CD8-positive, alpha-beta T cell (primary cell): ENCODE measurements at regions of chr14 and their contacts with region 1.

Region 1: GRCh38 chr14:54366736-54367735 is 29.8 kb upstream of the CDKN3 start:
- DNase-seq: peak in 8 of 9 experiments; percentile 9 to 61 (median 39)
- ATAC-seq: peak; percentile 94
- H3K4me3 ChIP-seq: no peak overlapping the region
- H3K4me3 Mint-ChIP-seq: no peak overlapping the region
- H3K27ac ChIP-seq: no peak overlapping the region
- H3K27ac Mint-ChIP-seq: no peak overlapping the region
- H3K4me1 ChIP-seq: no peaks in the 10 kb centered on the region
- H3K4me1 Mint-ChIP-seq: peaks cover 1% of the 10 kb centered on the region
- H3K27me3 ChIP-seq: no peaks in the 10 kb centered on the region
- H3K27me3 Mint-ChIP-seq: peaks cover 5% of the 10 kb centered on the region
- CTCF ChIP-seq: peak; percentile 30

Region 2: GRCh38 chr14:52380294-52380693 is 1986.7 kb before region 1 on chr14:
- CTCF ChIA-PET with region 1: no interaction called
- POLR2A ChIA-PET with region 1: no interaction called
- intact Hi-C with region 1: no loop called
- DNase-seq: no peak
- ATAC-seq: no peak
- H3K4me3 ChIP-seq: no peak overlapping the region
- H3K4me3 Mint-ChIP-seq: no peak overlapping the region
- H3K27ac ChIP-seq: no peak overlapping the region
- H3K27ac Mint-ChIP-seq: no peak overlapping the region
- H3K4me1 ChIP-seq: peaks cover 7% of the 10 kb centered on the region
- H3K4me1 Mint-ChIP-seq: peaks cover 5% of the 10 kb centered on the region
- H3K27me3 ChIP-seq: no peaks in the 10 kb centered on the region
- H3K27me3 Mint-ChIP-seq: no peaks in the 10 kb centered on the region
- CTCF ChIP-seq: no peak

Region 3: DNA sequence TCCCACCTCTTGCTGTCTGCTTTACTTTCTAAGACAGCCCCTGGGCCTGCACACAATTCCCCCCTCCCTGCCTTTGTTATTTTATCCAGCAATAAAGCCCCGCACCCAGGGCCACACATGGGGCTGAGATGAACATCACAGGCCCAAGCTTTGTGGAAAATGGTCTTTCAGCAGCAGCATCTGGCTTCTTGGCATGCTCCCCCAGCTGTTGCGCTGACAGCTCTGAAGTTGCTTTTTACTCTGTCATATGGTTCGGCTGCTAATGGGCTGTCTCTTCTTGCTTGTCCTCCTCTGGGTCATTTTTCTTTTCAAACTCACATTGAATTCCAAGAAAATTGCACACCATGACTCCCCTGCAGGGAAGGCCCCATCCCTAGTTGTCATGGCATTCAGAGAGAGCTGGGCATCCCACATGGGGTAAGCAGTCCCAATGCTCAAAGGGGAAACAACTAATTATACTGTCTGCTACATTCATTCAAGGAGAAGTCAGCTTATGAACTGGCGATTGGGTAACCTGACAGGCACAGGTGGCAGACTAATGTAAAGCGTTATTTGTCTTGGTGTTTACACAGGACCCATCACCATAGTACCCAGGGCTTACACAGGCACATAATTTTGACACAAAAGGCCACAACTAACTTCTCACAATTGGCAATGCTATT is 44.2 kb before region 1 on chr14:
- CTCF ChIA-PET with region 1: no interaction called
- POLR2A ChIA-PET with region 1: no interaction called
- intact Hi-C with region 1: no loop called
- DNase-seq: no peak
- ATAC-seq: no peak
- H3K4me3 ChIP-seq: no peak overlapping the region
- H3K4me3 Mint-ChIP-seq: no peak overlapping the region
- H3K27ac ChIP-seq: no peak overlapping the region
- H3K27ac Mint-ChIP-seq: no peak overlapping the region
- H3K4me1 ChIP-seq: no peaks in the 10 kb centered on the region
- H3K4me1 Mint-ChIP-seq: no peaks in the 10 kb centered on the region
- H3K27me3 ChIP-seq: no peaks in the 10 kb centered on the region
- H3K27me3 Mint-ChIP-seq: peaks cover 8% of the 10 kb centered on the region
- CTCF ChIP-seq: no peak

Region 4: GRCh38 chr14:54420013-54420809 is 53.2 kb after region 1 on chr14:
- CTCF ChIA-PET with region 1: no interaction called
- POLR2A ChIA-PET with region 1: no interaction called
- intact Hi-C with region 1: loop called (anchors 1 to 2 kb)
- DNase-seq: peak in 2 of 9 experiments; percentile 17 to 32
- ATAC-seq: no peak
- H3K4me3 ChIP-seq: no peak overlapping the region
- H3K4me3 Mint-ChIP-seq: no peak overlapping the region
- H3K27ac ChIP-seq: no peak overlapping the region
- H3K27ac Mint-ChIP-seq: peak overlapping the region; percentile 55
- H3K4me1 ChIP-seq: no peaks in the 10 kb centered on the region
- H3K4me1 Mint-ChIP-seq: peaks cover 2% of the 10 kb centered on the region
- H3K27me3 ChIP-seq: no peaks in the 10 kb centered on the region
- H3K27me3 Mint-ChIP-seq: no peaks in the 10 kb centered on the region
- CTCF ChIP-seq: peak; percentile 49

Region 5: GRCh38 chr14:54440873-54441868 is 74.1 kb after region 1 on chr14 and contains the start of gene CNIH1:
- CTCF ChIA-PET with region 1: interaction called, 3 read pairs
- POLR2A ChIA-PET with region 1: no interaction called
- intact Hi-C with region 1: loop called in 1 of 2 experiments (anchors 1 kb)
- DNase-seq: peak; percentile 88 to 98 (median 93)
- ATAC-seq: peak; percentile 92
- H3K4me3 ChIP-seq: peak within 1 kb of the TSS; percentile 45 to 66
- H3K4me3 Mint-ChIP-seq: peak within 1 kb of the TSS; percentile 93
- H3K27ac ChIP-seq: peak within 1 kb of the TSS; percentile 76 to 81
- H3K27ac Mint-ChIP-seq: peak within 1 kb of the TSS; percentile 96
- H3K4me1 ChIP-seq: peaks cover 18% of the 10 kb centered on the region
- H3K4me1 Mint-ChIP-seq: peaks cover 41% of the 10 kb centered on the region
- H3K27me3 ChIP-seq: no peaks in the 10 kb centered on the region
- H3K27me3 Mint-ChIP-seq: no peaks in the 10 kb centered on the region
- CTCF ChIP-seq: peak; percentile 99
- total RNA-seq, gene CNIH1: 49.2 to 55.6 TPM

Region 6: DNA sequence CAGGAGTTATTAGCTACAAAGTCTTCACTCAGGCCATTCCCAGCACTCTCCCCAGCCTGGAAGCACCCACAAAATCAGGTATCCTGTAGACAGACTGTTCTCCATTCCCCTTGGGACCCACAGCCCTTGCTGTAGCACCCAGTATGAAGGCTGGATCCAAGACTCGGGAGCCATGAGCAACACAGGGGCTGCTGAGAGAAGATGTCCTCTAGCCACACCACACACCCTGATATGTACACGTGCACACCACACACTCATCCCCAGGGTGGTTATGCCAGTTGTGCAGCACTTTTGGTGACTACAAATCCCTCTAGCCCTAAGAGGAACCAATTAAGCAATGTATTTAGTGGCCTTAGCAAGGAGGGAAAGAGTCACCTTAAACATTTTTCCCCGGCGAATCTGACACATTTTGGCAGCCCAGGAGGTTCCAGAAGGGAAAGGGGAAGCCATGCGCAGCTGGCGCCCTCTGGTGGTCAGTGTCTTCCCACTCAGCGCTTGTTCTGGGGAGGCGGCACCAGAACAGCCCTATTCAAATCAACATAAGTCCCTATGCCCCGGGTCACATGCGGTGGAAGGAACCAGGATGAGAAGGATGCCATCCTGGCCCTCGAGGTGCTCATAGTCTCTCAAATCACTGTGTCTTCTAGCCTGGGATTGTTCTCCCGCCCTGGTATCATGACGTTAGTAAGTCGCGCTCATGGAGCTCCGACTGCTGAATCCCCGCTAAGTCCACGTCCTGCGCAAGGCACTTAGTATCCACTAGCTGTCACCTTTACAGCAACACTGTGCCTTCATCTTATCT is 438.7 kb after region 1 on chr14:
- CTCF ChIA-PET with region 1: no interaction called
- POLR2A ChIA-PET with region 1: no interaction called
- intact Hi-C with region 1: loop called in 1 of 2 experiments (anchors 10 kb)
- DNase-seq: peak; percentile 36 to 82 (median 71)
- ATAC-seq: peak; percentile 82
- H3K4me3 ChIP-seq: no peak overlapping the region
- H3K4me3 Mint-ChIP-seq: no peak overlapping the region
- H3K27ac ChIP-seq: no peak overlapping the region
- H3K27ac Mint-ChIP-seq: no peak overlapping the region
- H3K4me1 ChIP-seq: no peaks in the 10 kb centered on the region
- H3K4me1 Mint-ChIP-seq: peaks cover 5% of the 10 kb centered on the region
- H3K27me3 ChIP-seq: no peaks in the 10 kb centered on the region
- H3K27me3 Mint-ChIP-seq: peaks cover 8% of the 10 kb centered on the region
- CTCF ChIP-seq: peak; percentile 76